ENCODE measurements at regions of chr7 and their contacts with region 1.

Region 1: GRCh38 chr7:127585044-127585953 is at the start of gene GCC1:
- DNase-seq: peak; percentile 96
- ATAC-seq: peak; percentile 84
- H3K4me3 Mint-ChIP-seq: peak within 1 kb of the TSS; percentile 88
- H3K27ac Mint-ChIP-seq: peak within 1 kb of the TSS; percentile 91
- H3K4me1 Mint-ChIP-seq: peaks cover 68% of the 10 kb centered on the region
- H3K27me3 Mint-ChIP-seq: no peaks in the 10 kb centered on the region
- total RNA-seq, gene GCC1: 11.5 to 13.9 TPM

Region 2: GRCh38 chr7:127347567-127348246 is 237.6 kb before region 1 on chr7:
- CTCF ChIA-PET with region 1: interaction called, 5 read pairs
- POLR2A ChIA-PET with region 1: no interaction called
- intact Hi-C with region 1: loop called in 1 of 2 experiments (anchors 5 kb)
- DNase-seq: peak; percentile 87
- ATAC-seq: peak; percentile 98
- H3K4me3 Mint-ChIP-seq: peak overlapping the region; percentile 37
- H3K27ac Mint-ChIP-seq: no peak overlapping the region
- H3K4me1 Mint-ChIP-seq: peaks cover 21% of the 10 kb centered on the region
- H3K27me3 Mint-ChIP-seq: peaks cover 5% of the 10 kb centered on the region

Region 3: GRCh38 chr7:127651556-127652332 is 66.4 kb after region 1 on chr7 and contains the start of gene SND1:
- CTCF ChIA-PET with region 1: interaction called, 4 read pairs
- POLR2A ChIA-PET with region 1: no interaction called
- intact Hi-C with region 1: loop called (anchors 1 kb)
- DNase-seq: peak; percentile 99
- ATAC-seq: peak; percentile 94
- H3K4me3 Mint-ChIP-seq: no peak within 1 kb of the TSS
- H3K27ac Mint-ChIP-seq: peak within 1 kb of the TSS; percentile 99
- H3K4me1 Mint-ChIP-seq: peaks cover 37% of the 10 kb centered on the region
- H3K27me3 Mint-ChIP-seq: no peaks in the 10 kb centered on the region
- total RNA-seq, gene SND1: 193 to 214 TPM

Region 4: GRCh38 chr7:127858091-127858914 is 273.0 kb after region 1 on chr7:
- CTCF ChIA-PET with region 1: no interaction called
- POLR2A ChIA-PET with region 1: no interaction called
- intact Hi-C with region 1: loop called (anchors 5 kb)
- DNase-seq: no peak
- ATAC-seq: no peak
- H3K4me3 Mint-ChIP-seq: no peak overlapping the region
- H3K27ac Mint-ChIP-seq: no peak overlapping the region
- H3K4me1 Mint-ChIP-seq: peaks cover 58% of the 10 kb centered on the region
- H3K27me3 Mint-ChIP-seq: no peaks in the 10 kb centered on the region

Region 5: GRCh38 chr7:128135515-128136214 is 550.4 kb after region 1 on chr7:
- CTCF ChIA-PET with region 1: no interaction called
- POLR2A ChIA-PET with region 1: no interaction called
- intact Hi-C with region 1: loop called in 1 of 2 experiments (anchors 1 kb)
- DNase-seq: peak; percentile 83
- ATAC-seq: peak; percentile 92
- H3K4me3 Mint-ChIP-seq: peak overlapping the region; percentile 63
- H3K27ac Mint-ChIP-seq: no peak overlapping the region
- H3K4me1 Mint-ChIP-seq: peaks cover 21% of the 10 kb centered on the region
- H3K27me3 Mint-ChIP-seq: peaks cover 27% of the 10 kb centered on the region

Region 6: GRCh38 chr7:128739048-128739962 is 1154.0 kb after region 1 on chr7 and contains the start of gene CALU:
- CTCF ChIA-PET with region 1: no interaction called
- POLR2A ChIA-PET with region 1: no interaction called
- intact Hi-C with region 1: loop called in 1 of 2 experiments (anchors 2 kb)
- DNase-seq: peak; percentile 97
- ATAC-seq: peak; percentile 98
- H3K4me3 Mint-ChIP-seq: peak within 1 kb of the TSS; percentile 99
- H3K27ac Mint-ChIP-seq: peak within 1 kb of the TSS; percentile 93
- H3K4me1 Mint-ChIP-seq: peaks cover 38% of the 10 kb centered on the region
- H3K27me3 Mint-ChIP-seq: peaks cover 3% of the 10 kb centered on the region
- total RNA-seq, gene CALU: 32.9 to 33.8 TPM